GM13977 (cell line): ENCODE measurements at regions of chr1 and their contacts with region 1.

Region 1: DNA sequence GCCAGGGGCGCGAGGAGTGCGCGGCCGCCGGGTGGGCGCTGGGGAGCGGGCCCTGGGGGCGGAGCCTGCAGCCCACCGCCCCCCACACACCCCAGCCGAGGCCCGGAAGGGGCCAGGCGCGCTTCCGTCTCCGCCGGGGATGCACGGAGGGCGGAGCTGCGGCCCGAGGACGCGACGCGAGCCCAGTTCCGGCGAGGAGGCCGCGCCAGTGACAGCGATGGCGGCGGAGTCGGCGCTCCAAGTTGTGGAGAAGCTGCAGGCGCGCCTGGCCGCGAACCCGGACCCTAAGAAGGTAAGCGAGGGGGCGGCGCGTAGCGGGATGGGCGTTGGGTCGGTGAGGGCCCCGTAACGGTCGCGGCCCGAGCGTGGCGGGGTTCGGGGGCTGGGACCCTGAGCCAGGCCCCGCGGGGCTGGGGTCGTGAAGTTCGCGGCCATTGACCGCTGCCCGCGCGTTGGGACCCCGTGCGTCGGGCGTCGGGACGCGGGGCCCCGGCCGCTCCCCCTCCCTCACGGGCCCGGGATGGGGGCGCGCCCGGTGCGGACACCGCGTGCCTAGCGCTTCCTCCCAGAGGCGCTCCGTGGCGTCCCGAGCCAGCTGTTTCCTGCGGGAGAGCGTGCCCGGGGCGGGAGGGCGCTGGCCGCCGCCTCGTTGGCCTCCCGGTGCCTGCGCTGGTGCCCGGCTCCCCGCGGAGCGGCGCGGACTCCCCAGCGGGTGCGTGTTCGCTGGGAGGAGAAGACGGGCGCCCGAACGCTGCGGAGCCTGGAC is at the start of gene ELOA:
- DNase-seq: peak; percentile 97
- CTCF ChIP-seq: no peak

Region 2: DNA sequence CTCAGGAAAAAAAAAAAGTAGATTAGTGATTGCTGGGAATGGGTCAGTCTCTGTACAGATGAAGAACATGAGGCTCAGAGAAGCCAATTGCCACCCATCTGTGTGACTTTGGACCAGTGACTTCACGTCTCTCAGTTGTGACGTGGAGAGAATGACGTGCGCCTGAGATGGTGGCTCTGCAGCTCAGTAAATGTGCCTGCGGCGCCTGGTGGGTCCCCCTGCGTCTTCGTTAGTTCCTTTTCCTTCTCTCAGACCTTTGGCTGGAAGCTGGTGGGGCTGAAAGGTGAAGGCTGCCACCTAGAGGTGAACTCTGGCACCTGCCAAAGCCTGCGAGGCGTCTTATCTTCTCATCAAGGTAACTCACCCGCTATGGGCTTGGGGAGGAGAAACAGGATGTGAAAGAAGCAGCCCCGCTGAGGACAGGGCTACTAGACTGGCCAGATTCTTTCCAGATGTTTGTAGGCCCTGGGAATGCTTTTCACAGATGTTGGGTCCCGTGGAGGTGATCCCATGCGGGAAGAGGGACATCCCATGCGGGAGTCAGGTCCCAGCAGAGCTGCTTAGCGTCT is 203.7 kb before region 1 on chr1:
- in situ Hi-C with region 1: loop called (anchors 10 kb)
- DNase-seq: peak; percentile 87
- CTCF ChIP-seq: peak; percentile 85

Region 3: DNA sequence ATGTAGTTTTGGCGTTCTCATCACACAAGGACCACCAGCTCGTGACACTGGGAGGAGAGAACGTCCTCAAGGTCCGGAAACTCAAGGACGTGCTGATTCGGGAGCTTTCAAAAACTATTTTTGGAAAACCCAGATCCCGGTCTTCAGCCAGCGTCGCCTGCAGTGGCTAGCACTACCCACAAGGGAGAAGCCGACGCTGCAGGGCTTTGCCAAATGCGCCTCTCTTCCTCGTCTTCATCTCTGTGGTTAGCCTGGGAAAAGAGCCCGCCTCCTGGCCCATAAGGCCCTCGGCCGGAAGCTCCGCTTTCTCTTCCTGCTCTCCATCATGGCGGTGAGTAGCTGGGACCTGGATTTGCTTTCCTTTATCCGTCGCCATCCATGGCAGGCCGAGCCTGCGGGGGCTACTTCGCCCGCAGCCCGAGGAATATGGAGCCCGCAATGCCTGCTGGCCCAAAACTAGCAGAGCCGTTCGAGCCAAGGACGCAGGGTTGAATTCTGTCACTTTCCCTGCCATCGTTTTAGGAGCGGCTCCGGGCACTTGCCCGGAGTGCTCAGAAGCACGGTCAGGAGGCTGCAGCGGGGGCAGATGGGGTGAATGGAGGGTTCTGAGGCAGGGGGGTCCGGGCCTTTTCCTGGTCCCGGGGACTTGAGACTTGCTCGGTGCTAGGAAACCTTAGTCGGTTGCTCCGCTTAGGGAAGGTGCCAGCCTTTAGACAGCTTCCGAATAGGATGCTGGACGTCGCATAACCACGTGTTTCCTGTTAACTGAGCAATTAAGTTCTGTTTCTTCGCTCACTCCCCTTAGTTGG is 51.8 kb before region 1 on chr1 and contains the start of gene RPL11:
- in situ Hi-C with region 1: loop called (anchors 10 kb)
- DNase-seq: peak; percentile 94
- CTCF ChIP-seq: peak; percentile 75